Cardiac septum (tissue), 1 donor: ENCODE measurements at regions of chr2 and their contacts with region 1.

Region 1: GRCh38 chr2:86562922-86563649 is at the start of gene CHMP3:
- DNase-seq: peak; percentile 99
- total RNA-seq, gene CHMP3: 175 TPM

Region 2: DNA sequence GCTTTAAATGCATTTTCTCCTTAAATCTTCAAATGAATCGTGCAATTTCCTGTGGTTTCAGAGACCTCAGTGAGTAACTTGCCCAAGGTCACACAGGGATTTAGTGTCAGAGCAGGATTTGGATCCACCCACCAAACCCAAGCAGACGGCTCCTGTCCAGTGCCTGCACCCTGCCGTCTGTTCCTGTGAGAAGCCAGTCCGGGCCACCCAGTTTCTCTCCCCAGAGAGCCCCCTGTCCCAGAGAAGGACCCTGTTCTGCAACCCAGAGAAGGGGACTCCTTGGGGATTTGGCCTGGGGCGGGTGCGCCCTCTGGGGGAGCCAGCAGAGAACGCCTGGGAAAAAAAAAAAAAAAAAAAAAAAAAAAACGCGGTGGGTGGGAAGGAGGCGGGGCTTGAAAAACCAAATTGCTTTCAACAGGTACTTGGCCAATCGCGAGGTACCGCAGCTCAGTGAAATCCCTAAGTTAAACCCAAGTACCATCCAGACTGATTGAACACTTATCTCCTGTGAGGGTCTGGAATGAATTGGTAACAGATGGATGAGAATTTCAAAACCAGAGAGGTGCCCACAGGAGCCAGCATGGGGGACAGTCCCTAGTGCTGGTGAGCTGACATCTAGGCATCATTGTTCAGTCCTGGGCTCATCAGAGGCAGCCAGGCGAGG is 194.8 kb before region 1 on chr2:
- intact Hi-C with region 1: no loop called
- DNase-seq: no peak

Region 3: DNA sequence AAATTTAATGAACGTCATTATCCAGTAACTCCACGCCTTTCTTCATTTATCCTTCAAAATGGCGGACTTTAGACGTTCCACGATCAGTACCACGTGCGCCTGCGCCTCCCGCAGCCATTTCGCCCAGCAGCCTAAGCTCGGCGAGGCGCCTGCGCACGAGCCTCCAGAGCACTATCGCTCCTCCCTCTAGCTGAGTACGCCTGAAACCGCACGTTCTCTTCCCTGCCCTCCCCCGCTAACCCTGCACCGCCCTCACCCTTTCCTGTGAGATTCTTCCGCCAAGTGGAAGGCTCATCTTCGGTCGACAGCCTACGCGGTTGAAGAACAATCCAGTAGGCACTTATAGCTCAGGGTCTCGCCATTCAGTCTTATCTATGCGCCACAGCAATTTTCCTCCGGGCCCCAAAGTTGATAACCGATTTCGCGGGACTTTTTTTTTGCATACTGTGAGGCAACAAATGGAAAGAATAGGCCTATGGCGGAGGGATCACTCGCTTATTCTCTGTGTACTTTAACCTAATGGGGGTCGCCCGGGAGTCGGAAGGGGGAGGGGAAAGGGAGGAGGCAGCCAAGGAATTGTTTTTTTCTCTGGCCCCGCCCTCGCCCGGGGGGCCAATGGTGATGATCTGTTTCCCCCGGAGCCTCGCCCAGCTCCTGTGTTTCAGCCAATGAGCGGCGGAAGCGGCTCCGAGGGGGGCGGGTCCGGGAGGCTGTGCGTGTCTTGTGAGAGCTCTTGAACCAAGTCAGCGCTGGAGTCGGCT is 122.3 kb before region 1 on chr2 and contains the start of gene KDM3A:
- intact Hi-C with region 1: loop called (anchors 2 kb)
- DNase-seq: peak; percentile 100
- total RNA-seq, gene KDM3A: 41.6 TPM

Region 4: GRCh38 chr2:86584151-86584913 is 21.2 kb after region 1 on chr2:
- intact Hi-C with region 1: no loop called
- DNase-seq: no peak